ENCODE measurements at regions of chr2 and their contacts with region 1.

Region 1: DNA sequence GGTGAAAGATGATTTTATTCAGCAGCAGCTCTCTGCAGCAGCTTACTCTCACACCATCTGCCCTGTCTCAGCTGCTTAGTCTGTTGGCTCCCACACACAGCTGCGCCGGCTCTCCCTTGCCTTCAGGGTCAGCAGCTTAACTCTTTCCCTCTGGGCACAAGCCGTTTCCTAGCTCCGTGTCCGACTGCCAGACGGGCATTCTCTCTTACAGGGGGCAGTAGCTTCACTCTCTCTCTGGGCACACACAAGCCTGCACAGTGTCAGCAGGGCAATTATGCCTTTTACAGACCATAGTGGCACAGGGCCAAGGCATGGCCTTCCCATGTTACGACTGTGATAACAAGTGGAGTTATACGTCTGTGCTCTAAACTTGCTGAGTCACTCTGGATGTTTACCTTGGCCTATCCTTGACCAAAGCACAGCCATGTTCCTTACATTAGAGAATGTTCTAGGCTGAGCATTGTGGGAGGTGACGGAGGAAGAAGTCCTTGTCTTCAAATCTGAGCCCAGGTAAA is 31.7 kb downstream of the PCARE start:
- DNase-seq: peak; percentile 46
- H3K4me3 ChIP-seq: no peak overlapping the region
- H3K27ac ChIP-seq: peak overlapping the region; percentile 70
- H3K27me3 ChIP-seq: peaks cover 4% of the 10 kb centered on the region
- CTCF ChIP-seq: peak; percentile 10; the same call in 1 of the 2 replicates

Region 2: DNA sequence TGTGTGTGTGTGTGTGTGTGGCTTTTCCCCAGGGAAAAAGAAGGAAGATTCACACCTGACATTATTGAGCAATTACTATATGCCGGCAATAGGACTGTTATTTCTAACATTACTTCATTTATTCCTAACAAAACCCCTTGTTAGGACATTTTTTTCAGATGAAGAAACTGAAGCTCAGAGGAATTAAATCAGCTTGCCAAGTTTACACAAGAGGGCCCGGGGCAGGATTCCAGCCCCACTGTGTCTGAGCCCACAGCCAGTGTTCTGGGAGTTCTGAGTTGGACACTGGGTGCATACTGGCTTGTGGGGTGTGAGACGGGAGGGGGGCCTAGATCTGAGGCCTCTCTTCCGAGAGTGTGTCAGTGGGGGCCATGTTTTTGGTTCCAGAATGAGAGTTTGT is 51.6 kb before region 1 on chr2:
- CTCF ChIA-PET with region 1: no interaction called
- POLR2A ChIA-PET with region 1: interaction called, 10 read pairs
- DNase-seq: no peak
- H3K4me3 ChIP-seq: no peak overlapping the region
- H3K27ac ChIP-seq: peak overlapping the region; percentile 70
- H3K27me3 ChIP-seq: peaks cover 3% of the 10 kb centered on the region
- CTCF ChIP-seq: no peak

Region 3: DNA sequence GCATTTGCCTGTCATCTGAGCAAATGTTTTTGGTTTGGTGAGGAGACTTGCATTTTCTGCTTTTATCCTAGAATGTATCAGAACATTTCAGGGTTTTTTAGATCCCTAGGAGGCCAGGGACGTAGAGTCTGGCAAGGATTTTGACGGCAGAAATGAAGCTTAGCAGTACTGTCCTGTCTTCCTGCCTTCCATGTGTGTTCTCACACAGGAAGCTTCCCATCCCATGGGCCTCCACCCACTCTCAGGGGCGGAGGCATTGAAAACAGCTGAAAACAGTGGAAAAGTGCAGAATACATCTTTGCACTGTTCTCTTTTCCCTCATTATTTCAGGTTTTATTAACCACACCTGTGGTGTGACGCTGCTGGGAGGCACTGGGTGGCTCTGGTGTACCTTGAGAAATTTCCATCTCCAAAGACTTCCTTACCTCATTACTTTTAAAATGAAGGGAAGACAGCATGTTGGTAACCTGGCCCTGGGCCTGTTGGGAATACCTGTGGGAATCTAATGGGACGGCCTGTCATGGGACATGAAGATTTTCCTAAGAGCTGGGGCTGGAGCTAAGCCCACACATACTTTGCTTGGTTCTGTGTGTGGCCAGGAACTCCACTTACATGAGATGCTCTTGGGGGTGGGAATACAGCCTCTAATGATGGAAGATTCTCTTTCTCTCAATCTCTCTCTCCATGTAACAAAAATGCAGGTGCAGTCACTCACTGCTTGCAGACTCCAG is 11.2 kb after region 1 on chr2:
- CTCF ChIA-PET with region 1: interaction called, 12 read pairs
- POLR2A ChIA-PET with region 1: no interaction called
- DNase-seq: no peak
- H3K4me3 ChIP-seq: no peak overlapping the region
- H3K27ac ChIP-seq: no peak overlapping the region
- H3K27me3 ChIP-seq: peaks cover 5% of the 10 kb centered on the region
- CTCF ChIP-seq: no peak